H1 (cell line): ENCODE measurements at regions of chr5 and their contacts with region 1.

Region 1: GRCh38 chr5:140145818-140146522 is 20.2 kb downstream of the IGIP start:
- DNase-seq: peak in 1 of 2 experiments; percentile 83
- H3K4me3 ChIP-seq: peak overlapping the region; percentile 28 to 82 (median 72)
- H3K27ac ChIP-seq: no peak overlapping the region
- H3K4me1 ChIP-seq: peaks cover 0 to 9% (median 0%) of the 10 kb centered on the region in 4 experiments; a peak in 2 of 7 replicates
- H3K27me3 ChIP-seq: peaks cover 25 to 51% (median 37%) of the 10 kb centered on the region in 4 experiments
- CTCF ChIP-seq: peak; percentile 49 to 70 (median 54)
- EP300 ChIP-seq: peak in 1 of 2 experiments; percentile 73; a peak in 1 of 3 replicates
- POLR2A ChIP-seq: no peak
- RAD21 ChIP-seq: peak; percentile 16 to 52; a peak in 3 of 4 replicates

Region 2: DNA sequence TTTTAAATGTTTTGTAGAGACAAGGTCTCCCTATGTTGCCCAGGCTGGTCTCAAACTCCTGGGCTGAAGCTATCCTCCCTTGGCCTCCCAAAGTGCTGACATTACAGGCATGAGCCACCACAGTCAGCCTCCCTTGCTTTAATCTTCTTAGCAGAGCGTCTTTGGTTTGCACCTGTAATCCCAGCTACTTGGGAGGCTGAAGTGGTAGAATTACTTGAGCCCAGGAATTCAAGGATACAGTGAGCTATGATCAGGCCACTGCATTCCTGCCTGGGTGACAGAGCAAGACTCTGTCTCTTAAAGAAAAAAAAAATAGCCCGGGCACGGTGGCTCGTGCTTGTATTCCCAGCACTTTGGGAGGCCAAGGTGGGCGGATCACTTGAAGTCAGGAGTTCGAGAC is 557.0 kb before region 1 on chr5:
- CTCF ChIA-PET with region 1: no interaction called
- POLR2A ChIA-PET with region 1: no interaction called
- DNase-seq: no peak
- H3K4me3 ChIP-seq: no peak overlapping the region
- H3K27ac ChIP-seq: no peak overlapping the region
- H3K4me1 ChIP-seq: peaks cover 0 to 2% (median 0%) of the 10 kb centered on the region in 4 experiments; a peak in 1 of 7 replicates
- H3K27me3 ChIP-seq: no peaks in the 10 kb centered on the region
- CTCF ChIP-seq: no peak
- EP300 ChIP-seq: no peak
- POLR2A ChIP-seq: no peak
- RAD21 ChIP-seq: no peak

Region 3: DNA sequence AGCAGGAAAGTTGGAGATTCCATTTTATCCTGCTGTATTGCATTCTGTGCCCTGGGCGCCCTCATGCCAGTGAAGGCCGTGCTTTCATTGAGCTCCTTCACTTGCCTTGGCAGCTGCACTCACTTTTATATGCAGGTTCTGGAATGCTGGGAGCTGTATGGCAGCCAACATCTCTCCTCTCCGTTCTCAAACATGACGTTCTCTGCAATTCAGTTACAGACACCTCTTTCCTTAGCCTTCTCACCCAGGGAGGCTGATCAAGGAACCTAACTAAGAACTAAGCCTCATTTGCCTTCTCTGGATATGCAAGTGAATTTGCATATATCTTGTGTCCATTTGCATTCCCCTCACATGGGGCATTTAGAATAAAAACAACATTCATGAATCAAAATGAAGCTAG is 61.4 kb before region 1 on chr5:
- CTCF ChIA-PET with region 1: interaction called, 22 read pairs
- POLR2A ChIA-PET with region 1: no interaction called
- DNase-seq: no peak
- H3K4me3 ChIP-seq: no peak overlapping the region
- H3K27ac ChIP-seq: no peak overlapping the region
- H3K4me1 ChIP-seq: peaks cover 0 to 4% (median 2%) of the 10 kb centered on the region in 4 experiments; a peak in 1 of 7 replicates
- H3K27me3 ChIP-seq: no peaks in the 10 kb centered on the region
- CTCF ChIP-seq: no peak
- EP300 ChIP-seq: no peak
- POLR2A ChIP-seq: no peak
- RAD21 ChIP-seq: no peak

Region 4: GRCh38 chr5:140113699-140114263 is 32.2 kb before region 1 on chr5 and contains the start of gene PURA:
- CTCF ChIA-PET with region 1: interaction called, 91 read pairs
- POLR2A ChIA-PET with region 1: interaction called, 11 read pairs
- DNase-seq: peak in 1 of 2 experiments; percentile 94
- H3K4me3 ChIP-seq: peak within 1 kb of the TSS; percentile 53 to 85 (median 78)
- H3K27ac ChIP-seq: no peak within 1 kb of the TSS
- H3K4me1 ChIP-seq: peaks cover 6 to 20% (median 9%) of the 10 kb centered on the region in 4 experiments
- H3K27me3 ChIP-seq: peaks cover 32 to 71% (median 54%) of the 10 kb centered on the region in 4 experiments
- CTCF ChIP-seq: no peak
- EP300 ChIP-seq: peak in 1 of 2 experiments; percentile 55; a peak in 1 of 3 replicates
- POLR2A ChIP-seq: peak in 1 of 2 experiments; percentile 54; a peak in 1 of 3 replicates
- RAD21 ChIP-seq: no peak
- total RNA-seq, gene PURA: 2.1 and 2.3 TPM in 2 replicates

Region 5: DNA sequence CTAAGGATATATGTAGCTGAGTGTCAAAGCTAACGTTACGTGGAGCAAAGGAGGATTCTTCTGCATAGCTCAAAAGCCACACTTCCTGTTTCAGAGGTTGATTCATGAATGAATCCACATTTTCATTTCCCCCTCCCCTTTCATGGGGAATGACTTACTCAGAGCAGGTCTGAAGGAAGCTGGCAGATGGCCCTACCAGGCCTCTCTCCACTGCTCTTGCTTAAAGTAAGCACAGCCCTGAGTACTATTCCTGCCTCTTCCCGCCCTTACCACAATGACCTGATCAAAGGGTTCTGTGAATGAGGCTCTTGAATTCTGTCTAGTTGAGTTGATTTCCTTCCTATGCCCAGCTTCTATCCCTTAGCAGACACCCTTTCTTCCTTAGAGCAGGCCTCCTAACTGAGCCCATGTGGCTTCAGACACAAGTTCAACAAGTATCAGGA is 14.0 kb before region 1 on chr5:
- CTCF ChIA-PET with region 1: interaction called, 105 read pairs
- POLR2A ChIA-PET with region 1: interaction called, 3 read pairs
- DNase-seq: no peak
- H3K4me3 ChIP-seq: no peak overlapping the region
- H3K27ac ChIP-seq: no peak overlapping the region
- H3K4me1 ChIP-seq: peaks cover 0 to 7% (median 1%) of the 10 kb centered on the region in 4 experiments; a peak in 2 of 7 replicates
- H3K27me3 ChIP-seq: no peaks in the 10 kb centered on the region
- CTCF ChIP-seq: no peak
- EP300 ChIP-seq: no peak
- POLR2A ChIP-seq: no peak
- RAD21 ChIP-seq: no peak

Region 6: DNA sequence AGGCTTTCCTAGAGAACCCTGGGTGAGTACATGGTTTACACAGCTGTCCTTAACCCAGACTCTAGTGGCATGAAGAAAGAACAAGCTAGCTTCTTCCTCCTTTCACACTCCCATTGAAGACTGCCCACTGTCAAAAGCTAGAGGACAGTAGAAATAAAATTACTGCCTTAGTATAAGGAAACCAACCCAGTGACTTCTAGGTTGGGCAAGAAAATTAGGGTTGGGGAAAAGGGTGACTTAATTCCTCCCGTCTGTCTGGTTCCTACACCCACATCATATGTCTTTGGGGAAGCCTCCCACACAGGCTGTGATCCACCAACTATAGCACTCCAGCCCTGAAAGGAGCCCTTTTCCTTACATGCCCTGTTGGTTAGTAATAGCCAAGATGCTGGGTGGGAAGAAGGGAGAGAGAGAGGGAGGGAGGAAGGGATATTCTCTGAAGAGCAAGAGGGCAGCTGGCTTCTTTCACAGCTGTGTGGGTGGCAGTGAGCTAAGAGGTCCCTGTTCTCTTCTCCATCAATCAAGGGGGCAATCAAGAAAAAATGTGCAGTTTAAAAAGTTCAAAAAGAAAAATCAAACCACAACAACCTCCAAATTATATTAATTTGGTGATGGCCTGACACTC is 178.8 kb after region 1 on chr5:
- CTCF ChIA-PET with region 1: no interaction called
- POLR2A ChIA-PET with region 1: no interaction called
- DNase-seq: no peak
- H3K4me3 ChIP-seq: no peak overlapping the region
- H3K27ac ChIP-seq: no peak overlapping the region
- H3K4me1 ChIP-seq: peaks cover 0 to 5% (median 0%) of the 10 kb centered on the region in 4 experiments; a peak in 3 of 7 replicates
- H3K27me3 ChIP-seq: no peaks in the 10 kb centered on the region
- CTCF ChIP-seq: no peak
- EP300 ChIP-seq: no peak
- POLR2A ChIP-seq: no peak
- RAD21 ChIP-seq: no peak